ENCODE measurements at regions of chr4 and their contacts with region 1.

Region 1: DNA sequence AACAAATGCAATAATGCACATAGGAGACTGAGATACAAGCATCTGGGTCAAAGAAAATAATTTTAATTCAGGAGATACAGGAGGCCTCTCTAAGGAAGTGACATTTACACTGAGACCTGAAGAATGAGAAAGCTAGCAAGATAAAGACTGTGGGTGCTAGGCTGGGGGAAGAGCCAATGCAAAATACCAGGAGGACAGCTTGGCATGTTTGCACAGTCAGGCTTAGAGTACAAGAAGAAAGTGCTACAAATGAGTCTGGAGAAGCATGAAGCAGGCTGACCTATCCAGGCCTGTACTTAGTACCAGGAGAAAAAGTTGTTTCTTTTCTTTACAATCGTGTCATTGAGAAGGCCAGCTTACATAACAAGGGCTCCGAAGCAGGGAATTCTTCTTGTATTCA is 56.9 kb downstream of the GABRB1 start:
- DNase-seq: no peak
- ATAC-seq: no peak
- H3K4me3 ChIP-seq: no peak overlapping the region
- H3K27ac ChIP-seq: no peak overlapping the region
- H3K4me1 ChIP-seq: no peaks in the 10 kb centered on the region
- H3K27me3 ChIP-seq: no peaks in the 10 kb centered on the region
- CTCF ChIP-seq: no peak

Region 2: DNA sequence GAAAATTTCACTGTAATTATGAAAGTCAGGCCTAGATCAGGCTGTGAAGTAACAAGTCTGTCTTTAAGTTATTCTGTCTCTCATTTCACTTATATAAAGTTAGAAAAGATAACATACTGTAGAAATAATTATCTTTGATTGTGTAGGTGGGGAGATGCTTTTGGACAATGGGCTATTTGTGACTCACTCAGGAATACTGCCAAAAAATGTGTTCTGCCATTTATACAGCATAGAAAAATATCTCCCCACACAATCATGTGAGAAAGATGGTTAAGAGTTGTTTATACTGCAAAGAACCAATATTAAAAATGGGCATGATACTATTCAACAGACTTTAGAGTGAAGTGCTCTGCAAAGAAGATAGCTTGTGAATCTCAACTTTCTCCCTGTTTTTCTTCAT is 603.4 kb before region 1 on chr4:
- intact Hi-C with region 1: no loop called
- DNase-seq: no peak
- ATAC-seq: no peak
- H3K4me3 ChIP-seq: no peak overlapping the region
- H3K27ac ChIP-seq: no peak overlapping the region
- H3K4me1 ChIP-seq: no peaks in the 10 kb centered on the region
- H3K27me3 ChIP-seq: no peaks in the 10 kb centered on the region
- CTCF ChIP-seq: no peak

Region 3: DNA sequence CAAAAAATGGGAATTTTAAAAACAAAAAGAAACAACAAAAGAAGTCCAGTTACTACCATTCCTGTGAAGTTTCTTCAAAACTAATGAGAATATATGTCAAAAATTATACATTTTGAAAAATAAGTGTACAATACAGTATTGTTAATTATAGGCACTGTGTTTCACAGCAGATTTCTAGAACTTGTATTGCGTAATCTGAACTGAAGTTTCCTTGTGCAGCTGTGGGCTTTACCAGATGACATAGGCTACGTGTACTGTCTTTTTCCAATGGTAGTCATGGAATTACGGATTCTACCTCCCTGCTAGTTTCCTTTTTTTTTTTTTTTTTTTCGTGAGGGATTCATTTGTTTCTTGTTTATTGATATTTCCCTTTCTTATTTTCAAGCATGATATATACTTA is 584.6 kb before region 1 on chr4:
- intact Hi-C with region 1: loop called in 1 of 10 experiments (anchors 5 kb)
- DNase-seq: no peak
- ATAC-seq: no peak
- H3K4me3 ChIP-seq: no peak overlapping the region
- H3K27ac ChIP-seq: no peak overlapping the region
- H3K4me1 ChIP-seq: no peaks in the 10 kb centered on the region
- H3K27me3 ChIP-seq: no peaks in the 10 kb centered on the region
- CTCF ChIP-seq: no peak

Measured in heart right ventricle (tissue), 16 donors.